ENCODE measurements at regions of chr1 and their contacts with region 1.

Region 1: DNA sequence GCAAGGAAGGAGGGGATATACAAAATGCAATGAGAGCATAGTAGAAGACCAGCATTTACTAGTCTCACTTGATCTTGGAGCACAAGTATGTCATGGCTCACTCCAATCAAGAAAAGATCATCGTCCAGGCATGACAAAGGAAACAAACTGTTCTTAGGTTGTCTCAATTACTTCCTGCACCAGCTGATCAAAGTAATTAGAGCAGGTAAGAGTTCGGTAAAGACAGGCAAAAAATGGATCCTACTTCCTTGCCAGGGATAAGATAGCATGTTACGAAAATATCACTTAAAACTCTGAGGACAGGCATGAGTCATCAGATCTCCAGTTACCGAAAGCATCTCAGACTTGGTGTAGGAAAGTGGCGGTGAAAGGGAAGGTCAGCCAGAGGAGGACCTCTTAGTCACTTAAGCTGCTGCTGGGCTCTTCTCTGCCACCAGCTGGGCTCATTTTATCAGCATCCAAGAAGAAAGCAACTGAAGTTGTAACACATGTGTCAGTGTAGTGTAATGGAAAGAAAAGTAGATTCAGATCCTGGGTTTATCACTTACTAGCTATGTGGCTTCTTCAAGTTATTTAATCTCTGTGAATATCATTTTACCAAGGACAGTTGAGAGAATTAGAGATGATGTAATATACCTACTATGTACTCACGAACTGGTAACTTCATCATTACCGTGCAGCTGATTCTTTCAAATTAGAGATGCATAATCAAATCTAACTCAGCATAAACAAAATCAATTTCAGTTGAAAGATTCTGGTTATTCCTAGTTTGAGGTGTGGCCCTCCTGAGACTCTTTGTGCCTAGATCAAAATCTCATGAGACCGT is 46.8 kb downstream of the XCL1 start:
- DNase-seq: no peak
- ATAC-seq: peak in 7 of 8 donors; percentile 49 to 96 (median 79)
- H3K4me3 ChIP-seq: no peak overlapping the region
- H3K27ac ChIP-seq: peak overlapping the region in 5 of 10 donors; percentile 1 to 47 (median 26)
- H3K4me1 ChIP-seq: peaks cover 0 to 33% (median 17%) of the 10 kb centered on the region in 9 donors
- H3K27me3 ChIP-seq: no peaks in the 10 kb centered on the region
- CTCF ChIP-seq: peak in 2 of 9 donors; percentile 13 to 38

Region 2: GRCh38 chr1:168709405-168710305 is 86.4 kb after region 1 on chr1:
- intact Hi-C with region 1: loop called in 1 of 10 experiments (anchors 10 kb)
- DNase-seq: no peak
- ATAC-seq: peak; percentile 63 to 88 (median 79)
- H3K4me3 ChIP-seq: no peak overlapping the region
- H3K27ac ChIP-seq: peak overlapping the region in 9 of 10 donors; percentile 38 to 74 (median 66)
- H3K4me1 ChIP-seq: peaks cover 0 to 30% (median 15%) of the 10 kb centered on the region in 9 donors
- H3K27me3 ChIP-seq: no peaks in the 10 kb centered on the region
- CTCF ChIP-seq: no peak

Region 3: GRCh38 chr1:168742994-168743650 is 119.9 kb after region 1 on chr1:
- intact Hi-C with region 1: no loop called
- DNase-seq: no peak
- ATAC-seq: peak in 6 of 8 donors; percentile 35 to 95 (median 63)
- H3K4me3 ChIP-seq: no peak overlapping the region
- H3K27ac ChIP-seq: no peak overlapping the region
- H3K4me1 ChIP-seq: peaks cover 0 to 10% (median 1%) of the 10 kb centered on the region in 9 donors
- H3K27me3 ChIP-seq: no peaks in the 10 kb centered on the region
- CTCF ChIP-seq: no peak

Region 4: GRCh38 chr1:168987332-168987731 is 364.1 kb after region 1 on chr1:
- intact Hi-C with region 1: loop called in 1 of 10 experiments (anchors 10 kb)
- DNase-seq: no peak
- ATAC-seq: no peak
- H3K4me3 ChIP-seq: no peak overlapping the region
- H3K27ac ChIP-seq: no peak overlapping the region
- H3K4me1 ChIP-seq: no peaks in the 10 kb centered on the region
- H3K27me3 ChIP-seq: no peaks in the 10 kb centered on the region
- CTCF ChIP-seq: no peak